ENCODE measurements at regions of chr9 and their contacts with region 1.

Region 1: DNA sequence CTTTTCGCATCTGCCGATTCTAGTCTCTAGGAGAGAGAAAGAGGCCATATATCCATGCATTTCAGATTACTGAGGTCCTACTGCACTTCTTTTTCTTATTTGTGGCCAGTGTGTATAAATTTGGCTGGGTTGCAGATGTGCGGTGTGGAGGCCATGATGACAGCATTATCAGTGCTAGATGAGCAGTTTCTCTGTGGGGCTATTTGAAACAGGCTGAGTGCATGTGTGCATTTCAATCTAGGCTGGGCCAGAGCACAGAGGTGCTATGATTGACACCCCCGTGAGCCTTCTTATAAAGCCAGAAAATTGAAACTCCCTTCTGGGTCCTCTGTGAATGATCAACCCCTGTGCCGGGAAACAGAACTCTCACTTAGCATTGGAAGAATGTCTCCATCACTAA is 70.0 kb downstream of the TMEM252 start:
- DNase-seq: no peak
- ATAC-seq: peak; percentile 40 to 73 (median 56)
- H3K4me3 ChIP-seq: no peak overlapping the region
- H3K27ac ChIP-seq: peak overlapping the region in 2 of 12 donors; percentile 5 to 63
- H3K4me1 ChIP-seq: peaks cover 0 to 28% (median 13%) of the 10 kb centered on the region in 12 donors
- H3K27me3 ChIP-seq: no peaks in the 10 kb centered on the region
- CTCF ChIP-seq: no peak
- POLR2A ChIP-seq: no peak

Region 2: GRCh38 chr9:68447611-68448010 is 23.0 kb before region 1 on chr9:
- intact Hi-C with region 1: loop called in 1 of 10 experiments (anchors 2 kb)
- DNase-seq: no peak
- ATAC-seq: peak; percentile 47 to 80 (median 54)
- H3K4me3 ChIP-seq: no peak overlapping the region
- H3K27ac ChIP-seq: peak overlapping the region in 9 of 12 donors; percentile 13 to 82 (median 36)
- H3K4me1 ChIP-seq: peaks cover 0 to 60% (median 19%) of the 10 kb centered on the region in 12 donors
- H3K27me3 ChIP-seq: no peaks in the 10 kb centered on the region
- CTCF ChIP-seq: no peak
- POLR2A ChIP-seq: no peak

Region 3: DNA sequence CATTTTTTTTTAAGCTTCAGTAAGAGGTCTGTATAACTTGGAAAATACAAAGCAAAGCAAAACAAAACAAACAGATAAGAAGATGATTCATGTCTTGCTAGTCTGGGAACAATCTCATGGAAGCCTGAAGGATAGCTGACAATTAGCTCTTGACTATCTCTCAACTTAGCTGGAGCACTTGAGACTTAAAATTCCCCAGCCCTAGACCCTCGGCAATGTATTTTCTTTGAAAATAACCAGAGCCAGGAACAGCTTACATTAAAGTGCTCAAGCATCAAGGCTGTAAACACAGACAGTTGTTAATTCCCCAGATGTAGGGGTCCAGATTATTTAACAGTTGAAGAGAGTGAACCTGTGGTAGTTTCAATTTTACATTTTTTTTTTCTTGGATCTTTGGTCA is 12.8 kb before region 1 on chr9:
- intact Hi-C with region 1: no loop called
- DNase-seq: no peak
- ATAC-seq: no peak
- H3K4me3 ChIP-seq: no peak overlapping the region
- H3K27ac ChIP-seq: peak overlapping the region in 6 of 12 donors; percentile 4 to 72 (median 22)
- H3K4me1 ChIP-seq: peaks cover 0 to 71% (median 26%) of the 10 kb centered on the region in 12 donors
- H3K27me3 ChIP-seq: no peaks in the 10 kb centered on the region
- CTCF ChIP-seq: no peak
- POLR2A ChIP-seq: no peak

Region 4: GRCh38 chr9:68507130-68507805 is 36.6 kb after region 1 on chr9:
- intact Hi-C with region 1: no loop called
- DNase-seq: no peak
- ATAC-seq: peak in 2 of 4 donors; percentile 25 to 34
- H3K4me3 ChIP-seq: no peak overlapping the region
- H3K27ac ChIP-seq: peak overlapping the region in 10 of 12 donors; percentile 2 to 75 (median 60)
- H3K4me1 ChIP-seq: peaks cover 0 to 53% (median 28%) of the 10 kb centered on the region in 12 donors
- H3K27me3 ChIP-seq: no peaks in the 10 kb centered on the region
- CTCF ChIP-seq: peak; percentile 54 to 78 (median 72)
- POLR2A ChIP-seq: no peak

Region 5: DNA sequence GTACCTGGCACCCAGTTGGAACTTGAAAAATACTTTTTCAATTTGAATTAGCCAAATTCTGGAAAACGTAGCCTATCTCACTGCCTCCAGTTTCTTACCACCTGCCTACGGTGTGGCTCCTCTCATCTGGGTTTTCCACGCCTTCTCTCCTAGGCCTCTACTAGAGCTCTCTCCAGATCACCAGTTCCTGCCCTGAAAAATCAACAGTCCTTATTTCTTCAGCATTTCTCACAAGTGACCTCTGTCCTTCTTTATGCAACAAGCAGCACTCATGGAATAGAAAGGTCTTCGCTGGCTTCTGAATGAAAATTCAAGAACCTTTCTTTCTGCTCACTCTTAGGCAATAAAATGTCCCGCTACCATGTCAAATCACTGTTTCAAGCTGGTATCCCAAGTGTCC is 299.2 kb after region 1 on chr9:
- intact Hi-C with region 1: no loop called
- DNase-seq: no peak
- ATAC-seq: no peak
- H3K4me3 ChIP-seq: no peak overlapping the region
- H3K27ac ChIP-seq: no peak overlapping the region
- H3K4me1 ChIP-seq: peaks cover 0 to 34% (median 8%) of the 10 kb centered on the region in 12 donors
- H3K27me3 ChIP-seq: no peaks in the 10 kb centered on the region
- CTCF ChIP-seq: no peak
- POLR2A ChIP-seq: no peak

Region 6: GRCh38 chr9:69657269-69657668 is 1186.6 kb after region 1 on chr9:
- intact Hi-C with region 1: no loop called
- DNase-seq: no peak
- ATAC-seq: peak in 1 of 4 donors; percentile 59
- H3K4me3 ChIP-seq: no peak overlapping the region
- H3K27ac ChIP-seq: no peak overlapping the region
- H3K4me1 ChIP-seq: no peaks in the 10 kb centered on the region
- H3K27me3 ChIP-seq: no peaks in the 10 kb centered on the region
- CTCF ChIP-seq: no peak
- POLR2A ChIP-seq: no peak